Heart right ventricle (tissue), 16 donors: ENCODE measurements at regions of chr22 and their contacts with region 1.

Region 1: GRCh38 chr22:17492247-17492646 is 71.1 kb upstream of the SLC25A18 start:
- DNase-seq: no peak
- ATAC-seq: peak; percentile 16 to 93 (median 72)
- H3K4me3 ChIP-seq: no peak overlapping the region
- H3K27ac ChIP-seq: peak overlapping the region; percentile 7 to 65 (median 40)
- H3K4me1 ChIP-seq: peaks cover 0 to 29% (median 14%) of the 10 kb centered on the region in 9 donors
- H3K27me3 ChIP-seq: no peaks in the 10 kb centered on the region
- CTCF ChIP-seq: no peak

Region 2: DNA sequence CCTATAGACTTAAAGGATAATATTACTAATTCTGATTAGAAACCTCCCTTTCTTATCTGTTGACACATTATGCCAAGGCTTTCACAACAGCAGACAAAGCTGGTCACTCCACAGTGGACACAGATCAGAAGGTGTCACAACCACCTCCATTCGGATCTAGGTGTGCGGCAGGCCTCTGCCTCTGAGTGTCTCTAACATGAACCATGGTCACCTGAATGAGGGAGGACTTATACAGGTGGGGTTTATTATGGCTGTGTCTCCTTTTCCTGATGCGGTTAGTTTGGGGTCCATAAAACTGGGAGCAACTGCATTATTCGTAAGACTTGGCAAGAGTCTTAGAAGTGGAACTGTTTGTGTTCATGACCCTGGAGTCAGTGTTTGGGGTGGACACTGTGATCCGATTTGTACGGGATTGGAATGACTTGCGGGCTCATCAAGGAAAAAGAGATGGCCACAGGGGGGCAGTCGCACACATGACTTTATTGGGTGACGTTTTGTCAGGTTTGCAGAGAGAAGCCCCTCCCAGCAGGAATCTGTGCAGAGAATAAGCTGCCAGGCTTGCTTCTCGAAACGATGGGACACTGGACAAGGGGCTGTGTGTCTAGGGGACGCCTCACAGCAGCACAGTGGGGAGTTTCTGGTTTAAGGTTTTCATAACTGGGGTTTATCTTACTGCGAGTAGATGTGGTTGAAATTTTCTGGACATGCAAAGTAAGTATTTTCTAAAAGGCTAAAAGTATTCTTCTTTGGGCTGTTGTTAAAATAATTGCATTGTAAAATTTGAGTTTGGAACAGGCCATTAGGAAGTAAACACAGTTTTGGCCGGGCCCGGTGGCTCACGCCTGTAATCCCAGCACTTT is 574.9 kb before region 1 on chr22:
- intact Hi-C with region 1: loop called in 1 of 10 experiments (anchors 10 kb)
- DNase-seq: peak; percentile 49 to 56
- ATAC-seq: peak in 3 of 8 donors; percentile 38 to 70 (median 56)
- H3K4me3 ChIP-seq: no peak overlapping the region
- H3K27ac ChIP-seq: no peak overlapping the region
- H3K4me1 ChIP-seq: no peaks in the 10 kb centered on the region
- H3K27me3 ChIP-seq: peaks cover 0 to 79% (median 69%) of the 10 kb centered on the region in 7 donors
- CTCF ChIP-seq: peak; percentile 35 to 68 (median 64)

Region 3: DNA sequence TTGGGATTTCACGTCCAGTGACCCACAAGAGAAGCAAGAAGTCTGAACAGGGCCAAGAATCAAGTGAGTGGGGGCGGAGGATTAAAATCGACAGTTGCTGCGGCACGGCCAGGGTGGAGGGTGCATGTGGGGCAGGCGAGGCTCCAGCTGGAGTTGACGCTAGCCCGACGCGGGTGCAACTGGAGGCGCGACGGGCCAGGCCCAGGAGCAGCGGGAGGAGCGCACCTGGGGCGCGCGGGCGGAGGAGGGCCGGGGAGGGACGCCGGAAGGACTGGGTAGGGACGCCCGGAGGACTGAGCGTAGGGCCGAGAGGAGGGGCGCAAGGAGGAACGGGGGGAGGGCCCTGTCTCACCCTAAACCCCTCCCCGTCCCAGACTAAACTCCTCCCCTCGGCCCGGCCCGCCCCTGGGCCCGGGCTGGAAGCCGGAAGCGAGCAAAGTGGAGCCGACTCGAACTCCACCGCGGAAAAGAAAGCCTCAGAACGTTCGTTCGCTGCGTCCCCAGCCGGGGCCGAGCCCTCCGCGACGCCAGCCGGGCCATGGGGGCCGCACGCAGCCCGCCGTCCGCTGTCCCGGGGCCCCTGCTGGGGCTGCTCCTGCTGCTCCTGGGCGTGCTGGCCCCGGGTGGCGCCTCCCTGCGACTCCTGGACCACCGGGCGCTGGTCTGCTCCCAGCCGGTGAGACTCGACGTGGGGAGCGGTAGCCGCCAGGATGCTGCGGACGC is 407.5 kb before region 1 on chr22 and contains the start of gene IL17RA:
- intact Hi-C with region 1: loop called in 1 of 10 experiments (anchors 10 kb)
- DNase-seq: peak; percentile 92 to 93
- ATAC-seq: peak; percentile 98 to 99 (median 99)
- H3K4me3 ChIP-seq: peak within 1 kb of the TSS; percentile 72 to 98 (median 96)
- H3K27ac ChIP-seq: peak within 1 kb of the TSS; percentile 49 to 99 (median 90)
- H3K4me1 ChIP-seq: peaks cover 0 to 48% (median 17%) of the 10 kb centered on the region in 9 donors
- H3K27me3 ChIP-seq: no peaks in the 10 kb centered on the region
- CTCF ChIP-seq: peak in 1 of 9 donors; percentile 4
- total RNA-seq, gene IL17RA: 4.0 to 15.9 (median 5.9) TPM

Region 4: DNA sequence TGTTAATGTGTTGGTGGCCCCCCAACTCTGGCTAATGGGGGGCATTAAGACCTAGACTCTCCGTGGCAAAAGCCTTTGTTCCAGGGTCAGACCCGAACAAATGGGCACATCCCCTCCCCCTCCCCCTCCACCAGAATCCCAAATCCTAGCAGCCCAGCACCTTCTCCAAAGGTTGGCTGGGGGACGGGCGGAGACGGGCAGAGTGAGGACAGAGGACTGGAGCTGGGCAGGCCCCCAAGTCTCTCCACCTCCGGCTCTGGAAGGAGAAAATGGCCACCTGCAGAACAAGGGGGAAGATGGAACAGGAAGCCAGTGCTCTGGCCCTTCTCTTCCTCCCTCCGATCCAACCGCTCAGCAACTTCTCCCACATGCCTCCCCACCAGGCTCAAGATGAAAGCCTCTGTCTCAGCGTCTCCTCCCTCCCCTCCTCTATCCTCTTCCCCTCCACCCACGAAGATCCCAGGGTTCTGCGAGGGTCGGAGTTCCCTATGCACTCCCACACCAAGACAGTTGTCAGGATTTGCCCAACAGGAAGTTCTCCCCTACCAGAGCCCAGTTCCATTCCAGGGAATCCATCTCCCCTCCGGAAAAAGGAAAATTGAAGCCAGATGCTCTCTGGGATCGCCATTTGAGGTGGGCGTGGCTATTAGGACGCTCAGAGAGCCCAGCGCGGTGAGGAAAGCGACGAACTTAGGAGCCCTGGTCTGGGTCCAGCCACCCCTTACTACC is 293.1 kb before region 1 on chr22:
- intact Hi-C with region 1: loop called in 2 of 10 experiments (anchors 10 kb)
- DNase-seq: peak in 1 of 2 donors; percentile 80
- ATAC-seq: peak; percentile 70 to 87 (median 78)
- H3K4me3 ChIP-seq: peak overlapping the region; percentile 24 to 63 (median 50)
- H3K27ac ChIP-seq: peak overlapping the region; percentile 77 to 97 (median 88)
- H3K4me1 ChIP-seq: peaks cover 0 to 25% (median 15%) of the 10 kb centered on the region in 9 donors
- H3K27me3 ChIP-seq: peaks cover 0 to 5% (median 0%) of the 10 kb centered on the region in 7 donors
- CTCF ChIP-seq: no peak

Region 5: GRCh38 chr22:17368554-17369438 is 123.5 kb before region 1 on chr22:
- intact Hi-C with region 1: loop called in 3 of 10 experiments (anchors 5 to 10 kb)
- DNase-seq: peak; percentile 60 to 63
- ATAC-seq: peak; percentile 70 to 85 (median 76)
- H3K4me3 ChIP-seq: peak overlapping the region; percentile 41 to 88 (median 74)
- H3K27ac ChIP-seq: peak overlapping the region; percentile 64 to 90 (median 84)
- H3K4me1 ChIP-seq: peaks cover 0 to 29% (median 19%) of the 10 kb centered on the region in 9 donors
- H3K27me3 ChIP-seq: peaks cover 0 to 86% (median 3%) of the 10 kb centered on the region in 7 donors
- CTCF ChIP-seq: no peak

Region 6: DNA sequence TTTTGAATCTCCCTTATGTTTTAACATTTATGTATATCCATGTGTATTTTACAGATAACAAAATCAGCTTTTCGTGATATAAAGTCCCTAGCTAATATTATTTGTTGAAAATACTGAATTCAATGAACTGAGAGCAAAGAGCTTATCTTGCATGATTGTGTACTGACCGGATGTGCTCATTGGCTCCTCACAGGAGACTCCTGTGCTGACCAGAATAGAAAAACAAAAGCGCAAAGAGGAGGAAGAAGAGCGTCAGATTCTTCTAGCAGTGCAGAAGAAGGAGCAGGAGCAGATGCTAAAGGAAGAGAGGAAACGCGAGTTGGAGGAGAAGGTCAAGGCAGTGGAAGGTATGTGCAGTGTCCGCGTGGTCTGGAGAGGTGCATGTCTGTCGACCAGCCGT is 31.7 kb after region 1 on chr22:
- intact Hi-C with region 1: no loop called
- DNase-seq: no peak
- ATAC-seq: peak in 1 of 8 donors; percentile 5
- H3K4me3 ChIP-seq: no peak overlapping the region
- H3K27ac ChIP-seq: no peak overlapping the region
- H3K4me1 ChIP-seq: no peaks in the 10 kb centered on the region
- H3K27me3 ChIP-seq: no peaks in the 10 kb centered on the region
- CTCF ChIP-seq: no peak